Activated B cell treated with CpG ODN at 0.5 μM for 24 hours (primary cell): ENCODE measurements at regions of chr5 and their contacts with region 1.

Region 1: GRCh38 chr5:164013077-164013670 is 507.8 kb downstream of the MAT2B start:
- DNase-seq: no peak
- ATAC-seq: peak; percentile 50
- H3K4me3 Mint-ChIP-seq: no peak overlapping the region
- H3K27ac Mint-ChIP-seq: no peak overlapping the region
- H3K4me1 Mint-ChIP-seq: peaks cover 13% of the 10 kb centered on the region
- H3K27me3 Mint-ChIP-seq: no peaks in the 10 kb centered on the region
- CTCF ChIP-seq: no peak

Region 2: DNA sequence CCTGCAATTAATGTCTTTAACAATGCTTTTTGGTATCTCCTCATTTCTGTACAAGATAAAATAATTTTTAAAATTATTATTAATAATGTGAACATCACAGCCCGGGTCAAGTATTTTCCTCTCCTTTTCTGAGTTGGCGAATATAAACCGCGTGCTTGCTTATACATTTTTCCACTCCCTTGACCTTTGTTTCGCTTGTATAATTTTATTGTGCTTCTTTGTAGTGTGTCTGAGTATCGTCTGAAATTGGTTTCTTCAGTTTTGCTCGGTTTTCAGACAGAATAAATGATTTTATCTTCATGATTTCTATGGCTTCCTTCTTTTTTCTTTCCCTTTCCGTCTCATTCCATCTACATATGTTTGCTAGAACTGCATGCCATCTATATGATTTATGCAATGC is 59.3 kb before region 1 on chr5:
- CTCF ChIA-PET with region 1: no interaction called
- POLR2A ChIA-PET with region 1: no interaction called
- intact Hi-C with region 1: no loop called
- DNase-seq: no peak
- ATAC-seq: no peak
- H3K4me3 Mint-ChIP-seq: no peak overlapping the region
- H3K27ac Mint-ChIP-seq: no peak overlapping the region
- H3K4me1 Mint-ChIP-seq: peaks cover 3% of the 10 kb centered on the region
- H3K27me3 Mint-ChIP-seq: no peaks in the 10 kb centered on the region
- CTCF ChIP-seq: no peak

Region 3: GRCh38 chr5:164672931-164673694 is 659.9 kb after region 1 on chr5:
- CTCF ChIA-PET with region 1: no interaction called
- POLR2A ChIA-PET with region 1: no interaction called
- intact Hi-C with region 1: loop called (anchors 2 kb)
- DNase-seq: no peak
- ATAC-seq: no peak
- H3K4me3 Mint-ChIP-seq: no peak overlapping the region
- H3K27ac Mint-ChIP-seq: no peak overlapping the region
- H3K4me1 Mint-ChIP-seq: no peaks in the 10 kb centered on the region
- H3K27me3 Mint-ChIP-seq: no peaks in the 10 kb centered on the region
- CTCF ChIP-seq: no peak

Region 4: DNA sequence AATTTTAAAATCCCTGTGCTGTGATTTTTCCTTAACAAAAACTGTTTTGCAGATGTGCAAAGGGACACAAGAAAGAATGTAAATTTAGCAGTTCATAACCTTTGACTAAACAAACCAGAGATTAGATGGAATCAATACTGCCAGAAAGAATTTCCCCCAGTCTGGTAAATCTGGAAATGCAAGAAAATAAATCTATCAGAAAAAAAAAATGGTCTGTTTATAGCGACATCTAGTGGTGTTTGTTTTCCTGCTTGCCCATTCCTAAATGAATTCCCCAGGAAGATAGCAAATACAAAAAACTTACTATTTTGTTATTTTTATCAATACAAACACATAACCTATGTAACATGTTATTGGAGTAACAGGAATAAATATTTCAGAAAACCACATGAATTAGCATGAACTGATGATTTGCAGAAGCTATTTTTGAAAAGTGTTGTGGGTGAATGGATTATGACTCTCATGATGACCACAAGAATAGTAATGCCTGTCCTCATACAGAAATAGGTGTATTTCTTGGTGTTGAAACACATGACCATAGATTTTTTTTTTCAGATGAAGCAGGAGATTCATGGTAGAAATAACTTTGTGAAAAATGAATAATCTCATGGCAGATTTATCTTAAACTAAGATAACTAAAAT is 1196.0 kb after region 1 on chr5:
- CTCF ChIA-PET with region 1: interaction called, 4 read pairs
- POLR2A ChIA-PET with region 1: no interaction called
- intact Hi-C with region 1: loop called (anchors 1 kb)
- DNase-seq: no peak
- ATAC-seq: no peak
- H3K4me3 Mint-ChIP-seq: no peak overlapping the region
- H3K27ac Mint-ChIP-seq: no peak overlapping the region
- H3K4me1 Mint-ChIP-seq: no peaks in the 10 kb centered on the region
- H3K27me3 Mint-ChIP-seq: no peaks in the 10 kb centered on the region
- CTCF ChIP-seq: peak; percentile 32